GM12878 (cell line): ENCODE measurements at regions of chr3 and their contacts with region 1.

Region 1: DNA sequence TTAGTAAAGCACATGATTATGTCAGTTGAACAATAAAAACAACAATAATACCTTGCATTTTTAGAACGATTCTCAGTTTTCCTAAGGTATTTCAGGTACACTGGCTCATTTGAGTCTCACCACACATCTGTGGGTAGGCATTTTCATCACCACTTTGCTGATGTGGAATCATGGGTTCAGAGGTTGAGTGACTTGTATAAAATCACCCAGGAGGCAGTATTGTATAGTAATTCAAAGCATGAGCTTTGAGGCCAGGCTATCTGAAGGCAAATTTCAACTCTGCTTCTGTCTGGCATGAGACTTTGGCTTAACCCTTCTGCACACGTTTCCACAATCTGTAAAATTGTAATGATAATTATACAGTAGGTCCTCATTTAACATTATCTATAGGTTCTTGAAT is 183.9 kb upstream of the CMC1 start:
- DNase-seq: no peak
- ATAC-seq: peak; percentile 41; the same call in 2 of the 3 replicates
- H3K4me3 ChIP-seq: no peak overlapping the region
- H3K27ac ChIP-seq: no peak overlapping the region
- H3K4me1 ChIP-seq: no peaks in the 10 kb centered on the region
- H3K27me3 ChIP-seq: no peaks in the 10 kb centered on the region
- CTCF ChIP-seq: no peak
- EP300 ChIP-seq: no peak
- POLR2A ChIP-seq: no peak
- RAD21 ChIP-seq: 0 out of 2 replicates have a peak, but pooled peaks have one; percentile 13

Region 2: GRCh38 chr3:27800261-27800660 is 257.3 kb before region 1 on chr3:
- CTCF ChIA-PET with region 1: no interaction called
- POLR2A ChIA-PET with region 1: no interaction called
- RAD21 ChIA-PET with region 1: no interaction called
- SMC1A ChIA-PET with region 1: no interaction called
- in situ Hi-C with region 1: no loop called
- intact Hi-C with region 1: no loop called
- DNase-seq: no peak
- ATAC-seq: no peak
- H3K4me3 ChIP-seq: no peak overlapping the region
- H3K27ac ChIP-seq: no peak overlapping the region
- H3K4me1 ChIP-seq: no peaks in the 10 kb centered on the region
- H3K27me3 ChIP-seq: no peaks in the 10 kb centered on the region
- CTCF ChIP-seq: no peak
- EP300 ChIP-seq: no peak
- POLR2A ChIP-seq: no peak
- RAD21 ChIP-seq: no peak

Region 3: DNA sequence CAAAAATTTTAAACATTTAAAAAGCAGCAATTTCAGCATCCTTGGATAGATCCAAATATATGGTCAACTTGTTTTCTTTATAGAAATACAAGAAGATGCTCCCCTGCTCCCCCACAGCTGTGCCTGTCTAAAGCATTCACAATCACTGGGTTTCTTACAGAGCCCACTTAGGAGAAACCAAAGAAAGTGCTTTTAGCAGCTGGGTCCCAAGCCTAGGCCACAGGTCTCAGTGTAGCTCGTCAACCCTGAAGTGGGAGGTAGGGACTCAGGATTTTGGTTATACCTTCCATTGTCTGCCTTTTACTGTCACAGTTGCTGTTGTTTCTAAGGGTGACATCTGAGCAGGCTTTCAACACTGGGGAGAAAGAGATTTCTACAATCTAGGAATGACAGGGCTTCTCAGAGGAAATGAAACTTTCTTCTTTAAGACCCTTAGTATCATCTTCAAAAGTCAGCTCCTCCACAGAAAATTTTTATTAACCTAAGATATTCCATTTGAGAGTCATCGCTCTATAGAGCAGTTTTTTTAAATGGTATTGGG is 15.4 kb before region 1 on chr3:
- CTCF ChIA-PET with region 1: interaction called, 5 read pairs
- POLR2A ChIA-PET with region 1: interaction called, 9 read pairs
- RAD21 ChIA-PET with region 1: interaction called, 46 read pairs
- SMC1A ChIA-PET with region 1: interaction called, 46 read pairs
- in situ Hi-C with region 1: no loop called
- intact Hi-C with region 1: no loop called
- DNase-seq: no peak
- ATAC-seq: peak; percentile 78
- H3K4me3 ChIP-seq: no peak overlapping the region
- H3K27ac ChIP-seq: no peak overlapping the region
- H3K4me1 ChIP-seq: no peaks in the 10 kb centered on the region
- H3K27me3 ChIP-seq: no peaks in the 10 kb centered on the region
- CTCF ChIP-seq: no peak
- EP300 ChIP-seq: peak in 1 of 2 experiments; percentile 57; a peak in 1 of 4 replicates
- POLR2A ChIP-seq: no peak
- RAD21 ChIP-seq: no peak

Region 4: DNA sequence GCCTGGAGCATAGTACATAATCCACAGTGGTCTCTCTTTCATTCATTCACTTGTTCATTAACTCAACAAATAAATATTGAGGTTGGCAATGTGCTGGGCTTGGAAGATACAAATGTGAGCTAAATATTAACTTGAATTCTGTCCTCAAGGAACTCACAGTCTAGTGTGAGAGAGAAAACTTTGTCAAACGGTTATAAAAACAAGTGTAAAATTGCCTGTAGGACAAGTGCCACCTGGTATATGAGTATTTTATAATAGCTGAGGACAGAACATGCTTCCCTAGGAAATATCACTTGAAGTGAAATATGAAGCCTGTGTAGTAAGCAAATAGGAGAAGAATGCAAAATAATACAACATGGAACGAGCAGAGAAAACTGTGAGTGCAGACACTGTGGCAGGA is 10.8 kb after region 1 on chr3:
- CTCF ChIA-PET with region 1: no interaction called
- POLR2A ChIA-PET with region 1: no interaction called
- RAD21 ChIA-PET with region 1: interaction called, 4 read pairs
- SMC1A ChIA-PET with region 1: interaction called, 11 read pairs
- in situ Hi-C with region 1: no loop called
- intact Hi-C with region 1: no loop called
- DNase-seq: no peak
- ATAC-seq: no peak
- H3K4me3 ChIP-seq: no peak overlapping the region
- H3K27ac ChIP-seq: no peak overlapping the region
- H3K4me1 ChIP-seq: no peaks in the 10 kb centered on the region
- H3K27me3 ChIP-seq: no peaks in the 10 kb centered on the region
- CTCF ChIP-seq: no peak
- EP300 ChIP-seq: no peak
- POLR2A ChIP-seq: no peak
- RAD21 ChIP-seq: no peak